ENCODE measurements at regions of chr2 and their contacts with region 1.

Region 1: GRCh38 chr2:29923110-29923721 is 1.8 kb upstream of the ALK start:
- DNase-seq: no peak
- H3K4me3 ChIP-seq: no peak overlapping the region
- H3K27me3 ChIP-seq: peaks cover 22% of the 10 kb centered on the region
- CTCF ChIP-seq: peak; percentile 92

Region 2: DNA sequence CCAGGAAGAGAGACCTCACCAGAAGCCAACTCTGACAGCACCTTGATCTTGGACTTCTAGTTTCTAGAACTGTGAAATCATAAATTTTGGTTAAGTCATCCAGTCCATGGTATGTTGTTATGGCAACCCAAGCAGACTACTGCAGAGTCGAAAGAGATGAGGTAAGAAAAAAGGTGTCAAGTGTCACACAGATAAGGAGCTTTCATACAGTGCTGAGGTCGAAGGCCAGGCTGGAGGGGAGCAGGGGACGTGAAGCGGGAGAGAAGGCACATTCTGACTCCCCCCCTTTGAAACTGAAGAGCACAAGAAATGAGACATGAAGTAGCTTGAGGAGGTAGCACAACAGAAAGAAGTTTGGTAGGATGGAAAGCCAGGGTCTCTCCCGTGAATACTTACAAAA is 112.3 kb before region 1 on chr2:
- CTCF ChIA-PET with region 1: no interaction called
- POLR2A ChIA-PET with region 1: no interaction called
- DNase-seq: no peak
- H3K4me3 ChIP-seq: no peak overlapping the region
- H3K27me3 ChIP-seq: no peaks in the 10 kb centered on the region
- CTCF ChIP-seq: no peak

Region 3: DNA sequence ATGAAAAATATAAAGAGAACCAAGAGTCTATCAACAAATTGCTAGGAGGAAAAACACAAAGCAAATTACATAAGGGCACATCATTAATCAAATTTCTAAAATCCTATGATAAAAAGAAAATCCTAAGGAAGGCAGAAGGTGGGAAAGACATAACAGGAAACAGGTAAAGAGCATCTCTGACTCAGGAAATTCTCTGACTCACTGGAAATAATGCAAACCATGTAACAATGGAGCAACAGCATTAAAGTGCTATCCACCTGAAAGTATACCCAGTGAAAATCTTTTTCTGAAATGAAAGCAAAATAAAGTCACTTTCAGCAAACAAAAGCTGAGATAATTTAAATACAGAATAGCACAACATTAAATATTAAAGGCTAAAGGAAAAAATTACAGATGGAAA is 12.8 kb before region 1 on chr2:
- CTCF ChIA-PET with region 1: interaction called, 17 read pairs
- POLR2A ChIA-PET with region 1: no interaction called
- DNase-seq: no peak
- H3K4me3 ChIP-seq: no peak overlapping the region
- H3K27me3 ChIP-seq: no peaks in the 10 kb centered on the region
- CTCF ChIP-seq: no peak

Region 4: DNA sequence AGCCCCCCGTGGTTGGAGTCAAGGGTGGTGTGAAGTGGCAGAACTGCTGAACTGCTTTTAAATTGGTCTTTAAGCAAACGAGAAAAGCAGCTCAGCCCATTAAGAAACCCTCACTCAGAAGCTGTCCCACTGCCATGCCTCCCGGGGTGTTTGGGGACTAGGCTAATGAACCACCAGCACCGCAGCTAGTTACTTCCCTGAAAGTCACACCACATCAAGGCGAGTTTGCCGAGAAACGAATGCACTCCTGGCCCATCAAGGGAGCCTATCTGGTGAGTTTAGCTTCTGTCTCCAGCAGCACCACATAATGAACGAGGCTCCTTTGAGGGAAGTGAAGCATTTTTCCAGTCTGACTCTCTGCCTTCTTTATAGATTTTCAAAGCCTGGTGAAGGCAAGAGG is 12.8 kb after region 1 on chr2:
- CTCF ChIA-PET with region 1: interaction called, 18 read pairs
- POLR2A ChIA-PET with region 1: no interaction called
- DNase-seq: no peak
- H3K4me3 ChIP-seq: no peak overlapping the region
- H3K27me3 ChIP-seq: no peaks in the 10 kb centered on the region
- CTCF ChIP-seq: no peak

Region 5: GRCh38 chr2:30026087-30027055 is 103.2 kb after region 1 on chr2:
- CTCF ChIA-PET with region 1: interaction called, 14 read pairs
- POLR2A ChIA-PET with region 1: no interaction called
- DNase-seq: peak; percentile 44
- H3K4me3 ChIP-seq: no peak overlapping the region
- H3K27me3 ChIP-seq: no peaks in the 10 kb centered on the region
- CTCF ChIP-seq: peak; percentile 68

Region 6: GRCh38 chr2:30072250-30072842 is 149.1 kb after region 1 on chr2:
- CTCF ChIA-PET with region 1: interaction called, 59 read pairs
- POLR2A ChIA-PET with region 1: no interaction called
- DNase-seq: peak; percentile 8
- H3K4me3 ChIP-seq: no peak overlapping the region
- H3K27me3 ChIP-seq: peaks cover 6% of the 10 kb centered on the region
- CTCF ChIP-seq: peak; percentile 83

Region 7: DNA sequence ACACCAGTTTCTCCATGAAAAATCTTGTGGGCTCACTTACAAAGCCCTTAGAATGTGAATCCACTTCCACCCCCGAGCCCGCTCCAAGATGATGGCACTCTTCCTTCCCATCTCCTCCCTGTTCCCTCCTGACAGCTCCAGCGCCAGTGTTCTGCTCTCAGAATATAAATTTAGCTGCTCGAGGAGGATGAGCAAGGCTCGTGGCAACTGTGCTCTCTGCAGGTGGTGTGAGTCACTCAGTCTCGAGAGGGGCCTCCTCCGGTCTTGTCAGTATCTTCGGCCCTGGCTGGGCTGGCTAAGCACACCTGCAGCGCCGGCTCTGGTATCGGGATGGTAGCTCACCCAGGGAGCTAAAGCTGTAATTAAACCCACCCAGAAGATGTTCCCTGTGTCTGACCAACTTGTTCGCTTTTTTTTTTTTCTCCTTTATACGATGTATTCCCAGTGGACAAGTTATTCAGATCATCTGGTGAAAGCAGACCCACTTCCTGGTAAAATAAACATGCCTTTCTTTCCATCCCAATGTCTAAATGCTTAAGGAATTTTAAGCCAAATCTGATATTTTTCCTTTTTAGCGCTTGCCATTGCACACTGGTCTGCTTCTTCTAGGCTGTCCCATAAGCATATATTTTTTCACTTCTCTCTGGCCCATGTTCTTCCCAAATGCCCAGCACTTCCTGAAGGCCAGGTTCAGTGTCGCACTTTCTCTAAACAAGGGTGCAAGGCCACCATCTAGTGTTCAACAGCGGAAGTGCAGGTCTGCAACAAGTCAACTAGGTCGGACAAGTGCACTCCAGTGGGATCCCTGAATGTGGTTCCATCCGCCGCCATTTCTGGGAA is 192.1 kb after region 1 on chr2:
- CTCF ChIA-PET with region 1: interaction called, 17 read pairs
- POLR2A ChIA-PET with region 1: no interaction called
- DNase-seq: no peak
- H3K4me3 ChIP-seq: no peak overlapping the region
- H3K27me3 ChIP-seq: peaks cover 9% of the 10 kb centered on the region
- CTCF ChIP-seq: peak; percentile 96